ENCODE measurements at regions of chr5 and their contacts with region 1.

Region 1: DNA sequence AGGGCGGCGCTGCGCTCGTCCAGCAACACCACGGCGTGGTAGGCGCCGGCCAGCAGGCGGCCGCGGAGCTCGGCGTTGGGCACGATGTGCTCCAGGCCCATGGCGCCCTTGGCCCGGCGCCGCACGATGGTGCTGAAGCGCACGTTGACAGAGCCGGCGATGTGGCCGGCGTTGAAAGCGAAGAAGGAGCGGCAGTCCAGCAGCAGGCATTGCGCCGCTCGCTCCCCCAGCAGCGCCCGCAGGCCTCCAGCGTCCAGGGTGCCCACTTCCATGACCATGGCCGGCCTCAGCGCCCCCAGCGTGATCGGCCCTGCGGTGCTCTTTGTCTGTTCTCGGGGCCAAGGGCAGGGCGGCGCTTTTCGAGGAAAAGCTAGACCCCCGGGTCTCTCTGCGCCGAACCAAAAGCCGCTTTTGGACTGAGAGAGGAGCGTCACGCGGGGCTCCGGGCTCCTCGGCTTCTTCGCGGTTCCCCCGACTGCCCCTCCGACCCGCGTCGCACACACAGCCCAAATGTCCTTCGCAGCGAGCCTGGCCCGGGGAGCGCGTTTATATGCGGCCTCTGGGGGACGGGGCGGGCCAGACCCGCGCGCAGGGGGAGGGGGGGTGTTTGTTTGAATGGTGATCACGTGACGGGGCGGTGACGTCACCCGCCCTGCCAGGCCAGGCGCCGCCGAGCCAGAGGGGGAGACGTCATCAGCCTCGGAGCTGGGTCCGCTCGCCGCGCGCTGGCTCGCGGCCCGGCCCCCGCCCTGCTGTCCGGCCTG is at the start of gene DUSP1:
- DNase-seq: peak; percentile 98
- H3K4me3 ChIP-seq: peak within 1 kb of the TSS; percentile 60 to 96 (median 88)
- H3K27ac ChIP-seq: peak within 1 kb of the TSS; percentile 99
- H3K4me1 ChIP-seq: peaks cover 47% of the 10 kb centered on the region
- H3K27me3 ChIP-seq: no peaks in the 10 kb centered on the region
- CTCF ChIP-seq: peak; percentile 54 to 61
- POLR2A ChIP-seq: peak; percentile 99
- total RNA-seq, gene DUSP1: 36.1 and 46.5 TPM in 2 replicates

Region 2: GRCh38 chr5:172758083-172758833 is 12.6 kb before region 1 on chr5:
- CTCF ChIA-PET with region 1: interaction called, 6 read pairs
- POLR2A ChIA-PET with region 1: interaction called, 23 read pairs
- dilution Hi-C with region 1: no loop called
- intact Hi-C with region 1: no loop called
- DNase-seq: peak; percentile 75
- H3K4me3 ChIP-seq: no peak overlapping the region
- H3K27ac ChIP-seq: peak overlapping the region; percentile 53
- H3K4me1 ChIP-seq: peaks cover 8% of the 10 kb centered on the region
- H3K27me3 ChIP-seq: no peaks in the 10 kb centered on the region
- CTCF ChIP-seq: peak in 1 of 2 donors; percentile 4
- POLR2A ChIP-seq: no peak

Region 3: GRCh38 chr5:172833686-172834414 is 63.0 kb after region 1 on chr5 and contains the start of gene ERGIC1:
- CTCF ChIA-PET with region 1: interaction called, 5 read pairs
- POLR2A ChIA-PET with region 1: interaction called, 4 read pairs
- dilution Hi-C with region 1: no loop called
- intact Hi-C with region 1: loop called (anchors 1 kb)
- DNase-seq: peak; percentile 82
- H3K4me3 ChIP-seq: peak within 1 kb of the TSS; percentile 80 to 96 (median 80)
- H3K27ac ChIP-seq: peak within 1 kb of the TSS; percentile 71
- H3K4me1 ChIP-seq: peaks cover 12% of the 10 kb centered on the region
- H3K27me3 ChIP-seq: no peaks in the 10 kb centered on the region
- CTCF ChIP-seq: no peak
- POLR2A ChIP-seq: peak; percentile 72
- total RNA-seq, gene ERGIC1: 105 and 118 TPM in 2 replicates

Region 4: DNA sequence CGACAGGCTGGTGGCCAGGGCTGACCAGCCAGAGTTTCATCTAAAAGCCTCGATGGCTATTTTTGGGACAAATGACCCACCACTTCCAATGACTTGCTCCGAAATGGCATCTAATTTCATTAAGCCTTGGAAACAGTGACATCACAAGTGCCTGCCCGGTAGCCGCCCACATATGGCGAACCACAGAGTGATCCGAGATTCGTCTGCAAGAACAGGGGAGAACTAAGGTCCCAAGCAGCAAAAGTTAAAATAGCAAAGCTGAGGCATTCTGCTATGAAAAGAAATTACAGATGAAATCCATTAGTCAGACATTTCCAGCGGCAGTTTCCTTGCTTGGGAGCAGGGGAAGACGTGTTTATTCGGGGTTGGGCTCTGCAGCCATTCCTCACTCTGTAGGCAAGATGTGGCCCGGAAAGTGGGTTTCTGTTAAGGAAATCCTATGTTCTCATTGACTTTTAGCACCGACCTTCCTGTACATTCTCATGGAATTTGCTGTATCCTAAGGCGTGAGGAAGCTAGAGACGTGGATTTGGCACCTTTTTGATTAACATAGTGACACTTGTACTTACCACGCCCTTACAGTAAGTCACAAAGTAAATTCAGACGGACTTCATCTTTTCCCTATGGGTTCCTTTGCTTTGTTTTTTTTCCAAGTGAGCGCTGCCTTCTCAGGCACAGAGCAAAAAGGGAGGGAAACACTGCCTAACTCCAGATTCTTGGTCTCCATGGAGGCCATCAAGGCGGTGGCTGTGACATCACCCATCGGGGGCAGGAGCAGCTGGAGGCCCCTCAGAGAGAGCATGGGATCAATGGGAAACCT is 108.3 kb after region 1 on chr5:
- CTCF ChIA-PET with region 1: interaction called, 10 read pairs
- POLR2A ChIA-PET with region 1: interaction called, 10 read pairs
- dilution Hi-C with region 1: no loop called
- intact Hi-C with region 1: no loop called
- DNase-seq: peak; percentile 92
- H3K4me3 ChIP-seq: peak overlapping the region in 1 of 3 experiments; percentile 27
- H3K27ac ChIP-seq: peak overlapping the region; percentile 96
- H3K4me1 ChIP-seq: peaks cover 45% of the 10 kb centered on the region
- H3K27me3 ChIP-seq: no peaks in the 10 kb centered on the region
- CTCF ChIP-seq: no peak
- POLR2A ChIP-seq: peak; percentile 66

Region 5: DNA sequence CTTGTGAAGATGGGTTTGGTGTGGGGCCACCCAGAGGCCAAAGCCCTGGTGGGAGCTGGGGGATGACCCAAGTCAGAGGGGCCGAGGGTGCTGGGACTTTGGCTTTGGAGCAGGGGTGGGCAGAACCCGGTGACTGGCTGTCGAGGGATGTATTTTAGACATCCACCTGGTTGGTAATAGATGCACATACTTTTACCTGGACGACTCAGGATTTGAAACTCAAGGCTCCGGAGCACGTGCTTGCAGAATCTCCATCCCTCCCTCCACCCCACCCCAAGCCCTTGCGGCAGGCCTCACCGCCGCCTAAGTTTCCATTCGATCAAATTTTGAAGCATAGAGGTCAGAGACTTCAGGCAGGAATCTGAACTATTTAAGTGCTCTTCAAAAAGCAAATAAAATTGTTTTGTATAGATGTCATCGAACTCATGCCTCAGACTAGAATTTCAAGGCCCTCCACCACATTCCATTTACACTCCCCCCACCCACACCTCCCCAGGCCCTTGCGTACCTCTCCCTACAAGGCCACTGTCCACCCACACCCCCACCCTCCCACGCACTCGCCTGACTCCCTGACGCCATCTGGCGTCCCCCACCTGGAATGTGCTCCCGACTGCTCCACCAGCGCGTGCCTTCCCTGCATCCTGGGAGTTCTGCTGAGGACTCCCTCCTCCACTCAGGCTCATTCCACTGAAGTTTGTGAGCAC is 131.8 kb after region 1 on chr5:
- CTCF ChIA-PET with region 1: interaction called, 31 read pairs
- POLR2A ChIA-PET with region 1: interaction called, 7 read pairs
- dilution Hi-C with region 1: no loop called
- intact Hi-C with region 1: loop called (anchors 1 kb)
- DNase-seq: peak; percentile 46
- H3K4me3 ChIP-seq: no peak overlapping the region
- H3K27ac ChIP-seq: peak overlapping the region; percentile 72
- H3K4me1 ChIP-seq: peaks cover 43% of the 10 kb centered on the region
- H3K27me3 ChIP-seq: no peaks in the 10 kb centered on the region
- CTCF ChIP-seq: peak; percentile 15 to 54
- POLR2A ChIP-seq: no peak

Region 6: GRCh38 chr5:172939071-172939470 is 168.2 kb after region 1 on chr5:
- CTCF ChIA-PET with region 1: interaction called, 67 read pairs
- POLR2A ChIA-PET with region 1: interaction called, 4 read pairs
- dilution Hi-C with region 1: no loop called
- intact Hi-C with region 1: no loop called
- DNase-seq: no peak
- H3K4me3 ChIP-seq: no peak overlapping the region
- H3K27ac ChIP-seq: no peak overlapping the region
- H3K4me1 ChIP-seq: peaks cover 12% of the 10 kb centered on the region
- H3K27me3 ChIP-seq: no peaks in the 10 kb centered on the region
- CTCF ChIP-seq: peak; percentile 23 to 35
- POLR2A ChIP-seq: no peak

Region 7: GRCh38 chr5:173057062-173057924 is 286.4 kb after region 1 on chr5:
- CTCF ChIA-PET with region 1: no interaction called
- POLR2A ChIA-PET with region 1: no interaction called
- dilution Hi-C with region 1: no loop called
- intact Hi-C with region 1: no loop called
- DNase-seq: peak; percentile 99
- H3K4me3 ChIP-seq: peak overlapping the region; percentile 83 to 89 (median 86)
- H3K27ac ChIP-seq: peak overlapping the region; percentile 86
- H3K4me1 ChIP-seq: peaks cover 13% of the 10 kb centered on the region
- H3K27me3 ChIP-seq: no peaks in the 10 kb centered on the region
- CTCF ChIP-seq: peak in 1 of 2 donors; percentile 28
- POLR2A ChIP-seq: peak; percentile 37

Measured in endothelial cell of umbilical vein (primary cell).